Lower leg skin (tissue), 4 donors: ENCODE measurements at regions of chr15 and their contacts with region 1.

Region 1: GRCh38 chr15:42920519-42921227 is at the start of gene TTBK2:
- DNase-seq: peak; percentile 97 to 99
- H3K4me3 ChIP-seq: peak within 1 kb of the TSS; percentile 60
- CTCF ChIP-seq: peak in 1 of 3 donors; percentile 15
- POLR2A ChIP-seq: no peak
- total RNA-seq, gene TTBK2: 6.0 to 16.2 (median 11.9) TPM

Region 2: GRCh38 chr15:42704492-42704926 is 216.2 kb before region 1 on chr15:
- intact Hi-C with region 1: loop called (anchors 10 kb)
- DNase-seq: peak; percentile 64 to 85
- H3K4me3 ChIP-seq: no peak overlapping the region
- CTCF ChIP-seq: no peak
- POLR2A ChIP-seq: no peak

Region 3: GRCh38 chr15:42736793-42737528 is 183.7 kb before region 1 on chr15 and contains the start of gene CDAN1:
- intact Hi-C with region 1: loop called (anchors 10 kb)
- DNase-seq: peak; percentile 87 to 97
- H3K4me3 ChIP-seq: peak within 1 kb of the TSS; percentile 91
- CTCF ChIP-seq: no peak
- POLR2A ChIP-seq: peak in 1 of 2 donors; percentile 35
- total RNA-seq, gene CDAN1: 10.5 to 16.0 (median 14.0) TPM